ENCODE measurements at regions of chr12 and their contacts with region 1.

Region 1: GRCh38 chr12:53727310-53728041 is at the start of gene CALCOCO1:
- DNase-seq: peak; percentile 96
- H3K4me3 Mint-ChIP-seq: peak within 1 kb of the TSS; percentile 88
- H3K27ac Mint-ChIP-seq: peak within 1 kb of the TSS; percentile 73
- H3K4me1 Mint-ChIP-seq: peaks cover 23% of the 10 kb centered on the region
- H3K27me3 Mint-ChIP-seq: peaks cover 9% of the 10 kb centered on the region
- total RNA-seq, gene CALCOCO1: 19.8 and 22.4 TPM in 2 replicates

Region 2: GRCh38 chr12:53746592-53747092 is 19.2 kb after region 1 on chr12:
- intact Hi-C with region 1: no loop called
- DNase-seq: peak; percentile 80
- H3K4me3 Mint-ChIP-seq: no peak overlapping the region
- H3K27ac Mint-ChIP-seq: no peak overlapping the region
- H3K4me1 Mint-ChIP-seq: peaks cover 16% of the 10 kb centered on the region
- H3K27me3 Mint-ChIP-seq: peaks cover 36% of the 10 kb centered on the region

Region 3: GRCh38 chr12:53757095-53757770 is 29.8 kb after region 1 on chr12:
- intact Hi-C with region 1: loop called (anchors 1 kb)
- DNase-seq: peak; percentile 77
- H3K4me3 Mint-ChIP-seq: no peak overlapping the region
- H3K27ac Mint-ChIP-seq: no peak overlapping the region
- H3K4me1 Mint-ChIP-seq: peaks cover 20% of the 10 kb centered on the region
- H3K27me3 Mint-ChIP-seq: peaks cover 34% of the 10 kb centered on the region